ENCODE measurements at regions of chr10 and their contacts with region 1.

Region 1: DNA sequence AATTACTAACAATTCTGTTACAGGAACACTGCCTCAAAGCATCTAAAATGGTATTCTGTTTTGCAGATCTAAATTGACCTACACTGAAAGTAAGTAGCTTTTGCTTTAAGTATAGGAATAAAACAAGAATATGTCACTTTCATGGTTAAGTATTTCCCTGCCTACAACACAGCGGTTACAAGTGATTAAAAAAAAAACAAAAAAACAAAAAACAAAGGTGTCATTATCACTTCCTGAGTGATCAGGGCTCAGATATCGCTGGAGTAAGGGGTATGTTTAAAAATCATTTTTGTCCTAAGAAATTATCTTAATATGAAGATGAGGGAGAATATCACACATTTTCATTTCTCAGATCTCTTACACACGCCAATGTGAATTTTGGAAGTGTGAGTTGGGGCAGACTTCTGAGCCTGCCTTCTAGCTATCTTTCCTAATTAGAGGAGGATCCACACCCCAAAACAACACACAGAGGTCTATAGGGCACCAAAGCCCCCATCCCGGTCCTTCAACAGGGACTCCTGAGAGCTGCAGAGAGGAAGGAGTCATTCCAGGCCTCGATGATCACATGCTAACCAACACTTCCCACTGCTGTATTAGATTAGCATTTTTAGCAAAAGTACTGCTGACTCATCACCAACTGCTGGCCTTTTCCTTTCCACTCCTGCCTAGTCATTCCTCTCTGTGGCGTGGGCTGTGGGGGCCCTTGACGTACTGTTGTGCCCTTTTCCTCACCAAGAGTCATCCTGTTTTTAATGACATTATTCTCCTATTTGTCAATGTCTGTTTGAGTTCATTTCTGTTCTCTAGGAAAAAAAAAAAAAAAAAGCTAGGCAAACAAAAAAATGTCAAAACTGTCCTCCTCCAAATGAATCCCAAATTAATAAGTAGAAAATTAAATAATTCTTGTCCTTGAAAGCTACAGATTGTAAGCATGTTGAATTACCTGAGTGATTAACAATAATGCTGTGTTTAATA is 31.2 kb downstream of the PRTFDC1 start:
- DNase-seq: peak; percentile 33
- H3K4me3 Mint-ChIP-seq: peak overlapping the region; percentile 53
- H3K27ac Mint-ChIP-seq: peak overlapping the region; percentile 92
- H3K4me1 Mint-ChIP-seq: peaks cover 30% of the 10 kb centered on the region
- H3K27me3 Mint-ChIP-seq: no peaks in the 10 kb centered on the region

Region 2: DNA sequence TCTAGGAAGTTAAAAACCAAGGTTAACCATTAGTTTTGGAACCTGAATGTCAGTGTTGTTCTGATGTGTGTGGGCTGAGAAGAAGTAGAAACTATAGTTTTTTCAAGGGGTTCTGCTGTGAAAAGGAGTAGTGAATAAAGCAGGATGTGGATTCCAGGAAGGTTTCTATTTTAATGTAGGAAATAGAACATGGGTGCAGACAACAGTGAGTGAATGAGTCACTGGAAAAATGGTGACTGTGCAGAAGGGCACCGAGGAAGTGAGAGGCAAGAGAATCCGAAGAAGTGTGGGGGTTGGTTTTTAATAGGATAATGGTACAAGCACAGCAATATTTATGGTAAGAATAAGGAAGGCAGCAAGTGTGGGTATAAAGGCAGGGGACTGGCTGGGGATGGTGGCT is 317.9 kb before region 1 on chr10:
- intact Hi-C with region 1: loop called (anchors 2 kb)
- DNase-seq: no peak
- H3K4me3 Mint-ChIP-seq: peak overlapping the region; percentile 45
- H3K27ac Mint-ChIP-seq: peak overlapping the region; percentile 95
- H3K4me1 Mint-ChIP-seq: peaks cover 38% of the 10 kb centered on the region
- H3K27me3 Mint-ChIP-seq: no peaks in the 10 kb centered on the region

Region 3: DNA sequence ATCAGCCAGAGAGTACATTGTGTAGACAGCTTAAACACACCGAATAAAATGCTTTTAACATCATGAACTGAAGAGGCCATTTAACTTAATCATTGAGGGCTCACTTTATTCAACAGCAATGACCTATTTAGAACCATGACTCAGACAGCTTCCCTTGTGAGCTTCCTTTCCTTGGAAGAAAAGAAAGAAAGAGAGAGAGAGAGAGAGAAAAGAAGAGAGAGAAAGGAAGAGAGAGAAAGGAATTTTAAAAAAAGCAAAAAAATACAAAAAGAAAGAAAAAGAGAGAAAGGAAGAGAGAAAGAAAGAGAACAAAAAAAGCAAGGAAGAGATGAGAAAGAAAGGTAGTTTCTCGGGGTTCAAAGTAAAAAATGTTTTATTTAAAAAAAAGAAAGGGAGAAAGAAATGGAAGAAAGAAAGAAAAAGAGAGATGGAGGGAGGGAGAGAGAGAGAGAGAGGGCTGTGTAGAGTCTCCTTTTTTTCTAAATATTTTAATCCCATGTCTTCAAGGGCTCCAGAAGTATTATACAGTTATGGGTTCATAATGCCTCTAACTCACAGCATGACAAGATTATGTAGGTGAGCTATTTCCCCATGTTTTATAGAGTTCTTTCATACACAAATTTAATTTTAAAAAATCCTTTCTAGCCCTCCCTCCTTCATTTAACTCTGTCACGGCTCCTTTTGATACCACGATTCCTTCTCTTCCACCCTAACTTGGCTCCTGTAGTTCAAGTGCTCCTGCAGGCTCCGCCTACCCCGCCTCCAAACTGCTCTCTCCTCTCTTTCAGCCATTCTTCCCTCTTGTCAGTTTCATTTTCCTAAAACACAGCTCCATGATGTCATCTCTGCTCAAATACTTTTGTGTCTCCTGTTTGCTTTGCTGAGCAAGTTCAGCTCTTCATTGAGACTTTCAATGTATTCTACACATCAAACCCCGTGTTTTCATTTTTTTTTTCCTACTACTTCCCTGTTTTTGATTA is 54.3 kb before region 1 on chr10:
- intact Hi-C with region 1: loop called (anchors 1 kb)
- DNase-seq: no peak
- H3K4me3 Mint-ChIP-seq: peak overlapping the region; percentile 2
- H3K27ac Mint-ChIP-seq: peak overlapping the region; percentile 7
- H3K4me1 Mint-ChIP-seq: peaks cover 42% of the 10 kb centered on the region
- H3K27me3 Mint-ChIP-seq: no peaks in the 10 kb centered on the region

Region 4: GRCh38 chr10:24901686-24902399 is 19.4 kb before region 1 on chr10:
- intact Hi-C with region 1: loop called (anchors 1 kb)
- DNase-seq: no peak
- H3K4me3 Mint-ChIP-seq: no peak overlapping the region
- H3K27ac Mint-ChIP-seq: peak overlapping the region; percentile 73
- H3K4me1 Mint-ChIP-seq: peaks cover 33% of the 10 kb centered on the region
- H3K27me3 Mint-ChIP-seq: no peaks in the 10 kb centered on the region

Region 5: DNA sequence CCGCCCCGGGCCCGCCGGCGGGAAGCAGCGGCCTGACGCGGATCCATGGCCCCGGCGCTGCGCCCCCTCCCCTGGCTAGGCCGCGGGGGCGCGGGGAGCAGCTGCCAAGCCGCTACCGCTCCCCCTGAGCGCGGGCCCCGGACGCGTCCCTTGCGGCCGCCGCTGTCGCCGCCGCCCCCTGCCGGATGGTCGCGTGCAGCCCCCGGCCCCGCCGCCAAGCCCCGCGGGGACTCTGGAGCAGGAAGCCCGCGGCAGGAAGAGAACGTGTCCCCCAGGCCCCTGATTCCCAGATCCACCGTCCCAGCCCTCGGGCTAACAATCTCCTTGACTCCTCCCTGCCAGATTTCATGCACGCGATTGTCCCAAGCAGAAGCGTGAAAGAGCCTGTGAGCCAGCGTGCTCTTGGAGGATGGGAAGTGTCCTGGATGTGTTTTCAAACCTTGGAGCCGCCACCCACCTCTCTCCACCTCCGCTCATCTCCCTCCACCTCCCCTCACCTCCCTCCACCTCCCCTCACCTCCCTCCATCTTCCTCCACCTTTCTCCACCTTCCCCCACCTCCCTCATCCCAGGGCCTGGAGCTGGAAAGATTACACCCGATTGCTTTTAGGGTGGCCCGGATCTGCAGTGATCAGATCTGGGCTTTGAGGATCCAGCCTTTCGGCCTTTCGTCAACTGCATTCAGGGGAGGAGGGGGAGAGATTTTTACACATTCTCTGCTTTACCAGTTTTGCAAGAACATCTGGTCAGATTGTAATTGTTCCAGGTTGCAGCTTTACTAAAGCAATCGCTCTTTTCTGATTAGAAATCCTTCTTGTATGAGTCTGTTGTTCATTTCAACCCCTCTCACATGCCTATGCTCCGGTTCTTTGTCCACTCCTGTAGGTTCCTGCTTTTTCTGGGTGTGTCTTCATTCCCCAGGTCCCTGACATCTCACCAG is 31.8 kb after region 1 on chr10:
- intact Hi-C with region 1: loop called (anchors 1 kb)
- DNase-seq: peak; percentile 7
- H3K4me3 Mint-ChIP-seq: peak overlapping the region; percentile 79
- H3K27ac Mint-ChIP-seq: no peak overlapping the region
- H3K4me1 Mint-ChIP-seq: peaks cover 16% of the 10 kb centered on the region
- H3K27me3 Mint-ChIP-seq: no peaks in the 10 kb centered on the region